K562 (cell line): ENCODE measurements at regions of chr21 and their contacts with region 1.

Region 1: DNA sequence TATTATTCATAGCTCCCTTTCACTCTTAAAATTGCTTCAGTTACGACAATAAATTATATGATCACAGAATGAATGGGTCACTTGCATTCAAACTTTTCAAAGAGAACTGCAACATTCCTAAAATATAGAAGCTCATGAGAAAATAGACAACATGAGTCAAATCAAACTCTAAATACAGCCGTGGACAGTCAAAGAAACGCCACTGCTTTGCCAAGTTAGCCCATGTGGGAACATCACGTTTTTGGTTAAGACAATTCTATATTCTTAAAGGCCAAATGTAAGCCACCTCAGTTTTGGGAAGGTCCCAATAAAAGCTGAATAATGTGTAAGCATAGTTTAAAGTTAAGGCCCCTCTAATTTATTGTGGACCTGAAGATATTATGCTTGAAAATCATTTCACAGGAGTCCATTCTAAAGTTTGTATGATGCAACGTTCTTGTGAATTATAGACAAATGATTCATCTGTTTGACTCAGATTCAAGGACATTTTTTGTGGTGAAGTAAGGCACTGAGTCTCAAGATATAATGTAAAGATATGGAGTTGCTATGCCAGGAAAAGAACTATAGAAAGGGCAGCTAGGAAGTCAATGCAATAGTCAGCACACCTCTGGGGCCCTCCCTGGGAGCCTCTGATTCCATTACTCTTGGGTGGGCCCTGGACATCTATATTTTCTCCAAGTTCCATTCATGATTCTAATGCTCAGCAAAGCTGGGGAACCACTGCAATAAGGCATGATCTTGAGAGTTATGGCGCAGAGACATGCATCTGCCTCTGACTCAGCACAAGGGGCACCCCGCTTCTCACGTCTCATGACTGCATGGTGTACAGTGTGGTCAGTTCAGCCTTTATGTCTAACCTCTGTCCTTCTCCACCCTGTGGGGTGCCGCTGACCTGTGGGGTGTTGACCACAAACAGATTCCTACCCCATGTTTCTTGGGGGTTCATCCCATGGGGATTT is 33.9 kb downstream of the ETS2 start:
- DNase-seq: peak in 1 of 4 experiments; percentile 39
- ATAC-seq: peak; percentile 65
- H3K4me3 ChIP-seq: no peak overlapping the region
- H3K27ac ChIP-seq: peak overlapping the region; percentile 5; the same call in 1 of the 3 replicates
- H3K4me1 ChIP-seq: peaks cover 8 to 17% of the 10 kb centered on the region in 2 experiments; a peak in 3 of 5 replicates
- H3K27me3 ChIP-seq: no peaks in the 10 kb centered on the region
- CTCF ChIP-seq: no peak
- EP300 ChIP-seq: peak; percentile 3; the same call in 1 of the 2 replicates
- POLR2A ChIP-seq: no peak
- RAD21 ChIP-seq: 0 out of 4 replicates have a peak, but pooled peaks of 1 of the 2 experiments have one; percentile 5

Region 2: DNA sequence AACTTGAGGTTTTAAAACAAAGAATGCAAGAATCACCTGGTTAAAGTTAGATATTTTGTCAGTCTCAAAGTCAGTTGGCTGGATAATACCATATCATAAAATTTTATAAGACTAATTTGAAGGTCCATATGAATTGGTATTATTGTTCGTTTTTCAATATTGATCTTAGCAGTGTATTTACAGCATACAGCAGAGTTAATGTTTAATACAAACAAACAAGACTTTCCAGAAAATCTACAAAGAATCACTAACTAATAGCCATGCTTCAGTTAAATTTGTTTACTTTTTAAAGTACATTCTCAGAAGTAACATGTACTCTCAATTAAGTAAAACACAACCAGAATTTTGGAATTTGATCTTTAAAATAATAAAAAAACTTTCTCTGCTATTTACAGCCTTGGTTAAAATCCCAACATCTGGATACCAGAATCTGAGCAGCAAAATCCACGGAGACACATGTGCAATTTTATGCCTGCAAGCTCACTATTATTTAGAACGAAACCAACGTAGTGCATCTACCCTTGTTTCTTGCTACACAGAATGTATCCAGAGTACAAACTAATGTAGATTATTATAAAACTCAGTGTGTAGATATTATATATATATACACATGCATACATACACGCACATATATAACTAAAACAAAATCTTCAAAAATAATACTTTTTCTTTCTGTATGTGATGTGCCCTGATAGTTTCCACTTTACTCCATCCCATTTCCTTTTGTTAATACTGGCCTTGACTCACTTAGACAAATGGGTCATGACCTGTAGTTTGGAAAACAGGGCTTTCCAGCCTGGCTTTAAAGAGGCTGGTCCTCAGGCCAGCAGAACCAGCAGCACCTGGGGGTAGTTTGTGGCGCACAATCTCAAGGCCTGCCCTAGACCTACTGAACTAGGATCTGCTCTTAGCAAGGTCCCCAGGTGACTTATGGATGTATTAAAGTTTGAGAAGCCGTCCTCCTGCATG is 277.7 kb before region 1 on chr21:
- CTCF ChIA-PET with region 1: no interaction called
- POLR2A ChIA-PET with region 1: no interaction called
- in situ Hi-C with region 1: no loop called
- intact Hi-C with region 1: no loop called
- DNase-seq: no peak
- ATAC-seq: no peak
- H3K4me3 ChIP-seq: no peak overlapping the region
- H3K27ac ChIP-seq: no peak overlapping the region
- H3K4me1 ChIP-seq: no peaks in the 10 kb centered on the region
- H3K27me3 ChIP-seq: peaks cover 3 to 10% of the 10 kb centered on the region in 2 experiments; a peak in 3 of 5 replicates
- CTCF ChIP-seq: no peak
- EP300 ChIP-seq: no peak
- POLR2A ChIP-seq: no peak
- RAD21 ChIP-seq: no peak

Region 3: DNA sequence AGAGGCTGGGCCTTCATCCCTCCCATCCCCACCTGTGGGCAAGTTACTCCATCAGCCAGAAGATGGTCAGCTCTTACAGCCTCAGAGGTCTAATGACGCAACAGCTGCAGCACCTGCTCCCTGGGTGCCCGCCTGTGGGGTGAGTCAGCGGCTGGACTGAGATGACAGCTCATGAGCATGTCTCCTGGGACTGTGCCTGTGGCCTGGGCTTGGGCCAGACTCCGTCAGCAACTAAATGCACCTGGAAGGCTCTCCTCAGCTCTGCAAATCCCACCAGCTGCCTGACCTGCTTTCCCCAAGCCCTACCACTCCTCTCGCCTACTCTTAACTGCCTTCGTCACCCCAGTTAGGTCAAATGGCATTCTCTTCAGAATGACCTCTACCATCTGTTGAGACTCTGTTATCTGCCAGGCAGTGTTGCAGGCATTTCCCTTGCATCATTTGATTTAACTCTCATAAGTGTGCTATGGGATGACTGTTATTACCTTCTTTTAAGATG is 13.9 kb after region 1 on chr21:
- CTCF ChIA-PET with region 1: no interaction called
- POLR2A ChIA-PET with region 1: interaction called, 12 read pairs
- in situ Hi-C with region 1: no loop called
- intact Hi-C with region 1: no loop called
- DNase-seq: peak in 1 of 4 experiments; percentile 65
- ATAC-seq: peak; percentile 41
- H3K4me3 ChIP-seq: no peak overlapping the region
- H3K27ac ChIP-seq: no peak overlapping the region
- H3K4me1 ChIP-seq: peaks cover 37 to 62% of the 10 kb centered on the region in 2 experiments
- H3K27me3 ChIP-seq: no peaks in the 10 kb centered on the region
- CTCF ChIP-seq: no peak
- EP300 ChIP-seq: 0 out of 2 replicates have a peak, but pooled peaks have one; percentile 7
- POLR2A ChIP-seq: no peak
- RAD21 ChIP-seq: no peak

Region 4: DNA sequence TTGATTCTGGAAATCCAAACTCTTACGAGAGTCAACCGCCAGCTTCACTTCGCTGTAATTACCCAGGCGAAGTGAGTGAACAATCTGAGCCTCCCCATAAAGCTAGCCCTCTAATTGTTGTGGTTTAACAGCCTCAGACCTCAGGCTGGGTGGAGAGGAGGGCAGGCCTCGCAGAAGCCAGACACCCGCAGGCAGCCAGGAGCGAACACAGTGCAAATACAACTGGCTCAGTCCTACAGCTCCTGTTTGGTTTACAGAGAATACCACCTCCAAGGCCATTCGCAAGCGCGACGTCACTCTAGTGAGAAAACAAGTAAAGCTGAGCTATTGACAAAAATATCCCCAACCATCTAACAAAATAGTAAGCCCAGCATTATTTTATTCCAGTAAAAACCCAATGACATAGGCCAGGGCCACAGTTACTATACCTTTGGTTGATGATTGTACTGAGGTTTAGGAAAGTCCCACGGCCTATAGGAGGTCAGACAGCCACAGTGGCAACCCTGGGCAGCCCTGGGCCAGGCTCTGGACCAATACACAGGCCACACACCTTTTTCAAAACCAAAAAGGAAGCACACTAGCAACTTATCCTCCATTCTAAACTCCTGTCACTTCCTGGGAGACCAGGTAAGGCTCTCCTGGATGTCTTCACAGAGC is 129.4 kb after region 1 on chr21:
- CTCF ChIA-PET with region 1: no interaction called
- POLR2A ChIA-PET with region 1: no interaction called
- in situ Hi-C with region 1: no loop called
- intact Hi-C with region 1: no loop called
- DNase-seq: no peak
- ATAC-seq: peak; percentile 17; the same call in 2 of the 3 replicates
- H3K4me3 ChIP-seq: no peak overlapping the region
- H3K27ac ChIP-seq: no peak overlapping the region
- H3K4me1 ChIP-seq: peaks cover 0 to 4% of the 10 kb centered on the region in 2 experiments; a peak in 2 of 5 replicates
- H3K27me3 ChIP-seq: peaks cover 6 to 27% of the 10 kb centered on the region in 2 experiments; a peak in 3 of 5 replicates
- CTCF ChIP-seq: no peak
- EP300 ChIP-seq: no peak
- POLR2A ChIP-seq: no peak
- RAD21 ChIP-seq: no peak